KBM-7 (cell line): ENCODE measurements at regions of chrX and their contacts with region 1.

Region 1: GRCh38 chrX:130539721-130540321 is 138.0 kb downstream of the RBMX2 start:
- DNase-seq: peak; percentile 69

Region 2: DNA sequence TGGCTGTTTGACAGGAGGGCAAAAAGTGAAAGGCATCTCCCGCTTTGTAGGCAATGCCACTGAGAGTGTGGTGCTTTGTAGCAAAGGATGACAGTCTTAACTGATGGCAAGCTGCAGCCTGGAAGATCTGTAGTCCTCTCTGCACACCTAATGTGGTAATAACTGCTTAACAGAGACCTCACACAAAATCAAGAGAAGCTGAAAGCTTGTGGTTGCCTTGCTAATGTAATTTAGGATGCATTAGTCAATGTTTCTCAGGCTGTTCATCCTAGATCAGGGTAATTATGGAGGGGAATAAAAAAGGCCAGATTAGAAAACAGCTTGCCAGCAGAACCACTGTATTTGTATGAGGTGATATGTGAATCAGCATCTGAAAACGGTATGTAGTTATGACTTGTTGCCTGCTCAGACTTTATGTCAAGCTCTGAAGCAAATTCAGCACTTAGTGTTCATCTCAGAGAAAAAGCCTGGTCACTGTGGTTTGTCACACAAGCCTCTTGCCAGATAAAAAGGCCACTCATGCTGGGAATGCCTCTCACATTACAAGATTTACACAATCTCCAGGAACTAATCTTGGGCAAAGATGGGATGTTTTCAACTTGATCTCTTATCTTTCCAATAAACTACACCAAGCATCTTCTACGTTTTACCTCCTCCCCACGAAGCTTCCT is 232.4 kb after region 1 on chrX:
- in situ Hi-C with region 1: no loop called
- DNase-seq: no peak

Region 3: DNA sequence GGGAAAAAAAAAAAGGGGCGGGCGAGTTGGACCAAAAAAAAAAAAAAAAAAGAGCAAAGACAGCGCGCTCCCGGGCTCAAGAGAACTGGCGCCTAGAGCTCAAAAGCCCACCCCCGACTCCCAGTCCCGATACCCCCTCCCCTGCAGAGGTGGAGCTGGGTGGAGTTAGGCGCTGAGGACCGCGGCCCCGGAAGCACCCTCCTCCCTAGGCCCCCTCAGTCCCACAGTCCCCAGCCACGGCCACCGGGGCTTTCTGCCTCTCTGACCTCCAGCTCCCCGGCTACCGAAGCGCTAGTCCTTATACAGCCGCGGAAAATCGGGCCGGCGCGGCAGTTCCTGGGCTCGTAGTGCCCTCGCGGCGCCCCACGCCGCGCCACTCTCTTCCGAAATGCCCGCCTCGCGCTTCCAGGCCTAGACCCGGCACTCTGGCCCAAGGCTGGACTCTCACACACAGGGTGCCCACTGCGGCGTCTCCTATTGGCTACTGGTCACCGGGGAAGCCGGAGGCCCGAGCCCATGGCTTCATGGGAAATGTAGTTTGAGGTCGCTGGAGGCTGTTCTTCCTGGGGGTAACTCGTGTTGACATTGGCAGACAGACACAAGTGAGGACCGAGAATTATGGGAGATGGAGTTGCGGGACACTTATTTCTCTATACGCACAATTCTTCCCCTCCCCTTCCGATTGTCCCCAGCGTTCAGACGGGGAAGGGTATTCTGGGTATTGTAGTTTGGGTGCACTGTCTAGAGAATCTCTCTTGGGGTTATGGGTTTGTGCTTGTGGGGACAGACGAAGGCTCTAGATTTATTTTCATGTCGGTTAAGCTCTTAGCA is 363.2 kb after region 1 on chrX and contains the start of gene ENOX2:
- in situ Hi-C with region 1: loop called (anchors 25 kb)
- DNase-seq: peak; percentile 99